ENCODE measurements at regions of chr14 and their contacts with region 1.

Region 1: GRCh38 chr14:59126710-59127432 is 61.6 kb upstream of the DAAM1 start:
- DNase-seq: peak; percentile 62
- CTCF ChIP-seq: peak; percentile 66

Region 2: GRCh38 chr14:59107819-59108428 is 18.9 kb before region 1 on chr14:
- CTCF ChIA-PET with region 1: interaction called, 17 read pairs
- POLR2A ChIA-PET with region 1: no interaction called
- DNase-seq: no peak
- CTCF ChIP-seq: no peak

Region 3: GRCh38 chr14:59159169-59159568 is 32.3 kb after region 1 on chr14:
- CTCF ChIA-PET with region 1: no interaction called
- POLR2A ChIA-PET with region 1: no interaction called
- DNase-seq: no peak
- CTCF ChIP-seq: no peak

Region 4: DNA sequence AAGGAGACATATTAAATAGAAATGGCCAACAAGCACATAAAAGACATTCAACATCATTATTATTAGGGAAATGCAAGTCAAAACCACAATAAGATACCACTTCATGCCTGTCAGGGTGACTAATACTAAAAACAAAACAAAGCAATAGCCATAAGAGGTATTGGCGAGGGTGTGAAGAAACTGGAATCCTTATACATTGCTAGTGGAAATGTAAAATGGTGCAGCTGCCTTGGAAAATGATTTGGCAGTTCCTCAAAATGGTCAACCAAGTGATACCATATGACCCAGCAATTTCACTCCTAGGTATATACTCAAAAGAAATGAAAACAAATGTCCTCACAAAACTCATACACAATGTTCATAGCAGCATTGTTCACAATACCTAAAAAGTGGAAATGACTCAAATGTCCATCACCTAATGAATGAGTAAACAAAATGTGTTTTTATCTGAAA is 311.4 kb after region 1 on chr14:
- CTCF ChIA-PET with region 1: interaction called, 46 read pairs
- POLR2A ChIA-PET with region 1: no interaction called
- DNase-seq: no peak
- CTCF ChIP-seq: no peak